Right ventricle myocardium inferior (tissue), 1 donor: ENCODE measurements at regions of chr20 and their contacts with region 1.

Region 1: GRCh38 chr20:3781153-3781910 is at the start of gene SPEF1:
- DNase-seq: peak; percentile 82
- ATAC-seq: peak; percentile 80
- total RNA-seq, gene SPEF1: 0.14 TPM

Region 2: GRCh38 chr20:3767427-3768341 is 13.6 kb before region 1 on chr20 and contains the start of gene ADISSP:
- intact Hi-C with region 1: no loop called
- DNase-seq: peak; percentile 100
- ATAC-seq: peak; percentile 96
- total RNA-seq, gene ADISSP: 14.6 TPM

Region 3: GRCh38 chr20:3854462-3854871 is 73.1 kb after region 1 on chr20:
- intact Hi-C with region 1: loop called (anchors 2 kb)
- DNase-seq: no peak
- ATAC-seq: no peak